Heart left ventricle (tissue), 16 donors: ENCODE measurements at regions of chr16 and their contacts with region 1.

Region 1: GRCh38 chr16:57300387-57301125 is 16.1 kb upstream of the PLLP start:
- DNase-seq: peak; percentile 98 to 99 (median 99)
- ATAC-seq: peak; percentile 94 to 96 (median 94)
- H3K4me3 ChIP-seq: peak overlapping the region in 11 of 12 donors; percentile 20 to 57 (median 52)
- H3K27ac ChIP-seq: peak overlapping the region; percentile 66 to 94 (median 89)
- H3K4me1 ChIP-seq: peaks cover 0 to 41% (median 29%) of the 10 kb centered on the region in 12 donors
- H3K27me3 ChIP-seq: no peaks in the 10 kb centered on the region
- CTCF ChIP-seq: peak; percentile 89 to 99 (median 96)
- POLR2A ChIP-seq: peak in 1 of 2 donors; percentile 68

Region 2: DNA sequence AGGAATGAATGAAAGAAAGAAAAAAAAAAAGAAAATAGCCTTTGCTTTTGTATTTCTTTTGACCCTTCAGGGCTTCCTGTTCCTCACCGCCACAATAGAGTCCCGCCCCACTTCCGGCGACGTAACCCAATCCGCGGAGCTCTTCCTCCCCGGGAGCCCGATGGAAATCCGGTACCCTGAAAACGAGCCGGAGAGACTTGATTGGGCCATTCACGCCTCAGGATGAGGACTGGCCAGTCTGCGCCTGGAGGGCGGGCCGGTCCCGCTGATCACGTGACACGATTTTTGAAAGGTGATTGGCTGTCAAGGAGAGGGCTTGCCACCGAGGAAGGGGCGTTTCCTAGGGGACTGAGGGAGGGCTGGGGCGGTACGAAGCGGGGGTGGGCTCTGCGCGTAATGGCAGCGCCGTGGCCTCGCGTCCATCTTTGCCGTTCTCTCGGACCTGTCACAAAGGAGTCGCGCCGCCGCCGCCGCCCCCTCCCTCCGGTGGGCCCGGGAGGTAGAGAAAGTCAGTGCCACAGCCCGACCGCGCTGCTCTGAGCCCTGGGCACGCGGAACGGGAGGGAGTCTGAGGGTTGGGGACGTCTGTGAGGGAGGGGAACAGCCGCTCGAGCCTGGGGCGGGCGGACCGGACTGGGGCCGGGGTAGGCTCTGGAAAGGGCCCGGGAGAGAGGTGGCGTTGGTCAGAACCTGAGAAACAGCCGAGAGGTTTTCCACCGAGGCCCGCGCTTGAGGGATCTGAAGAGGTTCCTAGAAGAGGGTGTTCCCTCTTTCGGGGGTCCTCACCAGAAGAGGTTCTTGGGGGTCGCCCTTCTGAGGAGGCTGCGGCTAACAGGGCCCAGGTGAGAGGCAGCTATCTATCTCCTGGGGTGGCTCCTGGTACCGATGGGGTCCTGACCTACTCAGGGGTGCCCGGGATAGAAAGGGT is 114.3 kb before region 1 on chr16 and contains the starts of genes PSME3IP1 and RSPRY1:
- intact Hi-C with region 1: loop called in 1 of 10 experiments (anchors 5 kb)
- DNase-seq: peak; percentile 97 to 99 (median 99)
- ATAC-seq: peak; percentile 97 to 99 (median 98)
- H3K4me3 ChIP-seq: peak within 1 kb of the TSS; percentile 80 to 99 (median 93)
- H3K27ac ChIP-seq: peak within 1 kb of the TSS; percentile 78 to 97 (median 94)
- H3K4me1 ChIP-seq: peaks cover 9 to 50% (median 27%) of the 10 kb centered on the region in 12 donors
- H3K27me3 ChIP-seq: no peaks in the 10 kb centered on the region
- CTCF ChIP-seq: no peak
- POLR2A ChIP-seq: peak in 1 of 2 donors; percentile 71
- total RNA-seq, gene PSME3IP1: 48.8 to 71.9 (median 65.8) TPM
- total RNA-seq, gene RSPRY1: 13.4 to 22.9 (median 17.1) TPM

Region 3: DNA sequence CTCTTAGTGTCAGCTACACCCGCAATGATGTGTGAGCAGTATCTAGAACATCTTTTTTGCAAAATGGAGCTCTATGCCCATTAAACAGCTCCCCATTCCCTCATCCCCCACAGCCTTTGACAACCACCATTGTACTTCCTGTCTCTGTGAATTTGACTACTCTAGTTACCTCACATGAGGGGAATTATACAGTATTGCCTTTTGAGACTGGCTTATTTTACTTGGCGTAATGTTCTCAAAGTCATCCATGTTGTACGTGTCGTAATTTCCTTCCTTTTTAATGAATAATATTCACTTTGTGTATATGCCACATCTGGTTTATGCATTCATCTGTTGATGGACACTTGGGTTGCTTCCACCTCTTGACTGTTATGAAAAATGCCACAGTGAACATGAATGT is 34.8 kb after region 1 on chr16:
- intact Hi-C with region 1: loop called in 1 of 10 experiments (anchors 1 kb)
- DNase-seq: no peak
- ATAC-seq: peak in 2 of 4 donors; percentile 53 to 92
- H3K4me3 ChIP-seq: no peak overlapping the region
- H3K27ac ChIP-seq: peak overlapping the region in 6 of 12 donors; percentile 11 to 66 (median 40)
- H3K4me1 ChIP-seq: peaks cover 0 to 17% (median 0%) of the 10 kb centered on the region in 12 donors
- H3K27me3 ChIP-seq: no peaks in the 10 kb centered on the region
- CTCF ChIP-seq: no peak
- POLR2A ChIP-seq: no peak

Region 4: GRCh38 chr16:57349212-57350031 is 48.9 kb after region 1 on chr16:
- intact Hi-C with region 1: no loop called
- DNase-seq: no peak
- ATAC-seq: peak in 1 of 4 donors; percentile 32
- H3K4me3 ChIP-seq: no peak overlapping the region
- H3K27ac ChIP-seq: no peak overlapping the region
- H3K4me1 ChIP-seq: peaks cover 0 to 13% (median 0%) of the 10 kb centered on the region in 12 donors
- H3K27me3 ChIP-seq: peaks cover 0 to 5% (median 0%) of the 10 kb centered on the region in 9 donors
- CTCF ChIP-seq: no peak
- POLR2A ChIP-seq: no peak

Region 5: DNA sequence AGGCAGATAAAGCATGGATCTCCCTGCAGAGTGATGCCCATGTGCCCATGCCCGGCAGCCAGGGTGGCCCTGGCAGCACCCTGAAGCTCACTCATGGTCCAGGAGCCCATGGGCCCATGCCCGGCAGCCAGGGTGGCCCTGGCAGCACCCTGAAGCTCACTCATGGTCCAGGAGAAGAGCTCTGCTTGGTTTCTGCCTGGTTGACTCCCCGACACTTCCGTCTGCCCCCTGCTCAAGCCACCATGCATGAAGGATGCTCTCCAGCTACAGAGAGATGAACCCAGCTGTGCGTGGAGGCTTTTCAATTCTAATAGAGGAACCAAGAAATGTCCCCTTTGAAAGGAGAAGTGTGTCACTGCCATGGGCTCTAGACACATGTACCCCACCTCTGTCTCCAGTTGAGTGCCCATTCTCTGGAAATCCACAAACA is 112.8 kb after region 1 on chr16:
- intact Hi-C with region 1: loop called in 9 of 10 experiments (anchors 1 to 2 kb)
- DNase-seq: no peak
- ATAC-seq: no peak
- H3K4me3 ChIP-seq: no peak overlapping the region
- H3K27ac ChIP-seq: no peak overlapping the region
- H3K4me1 ChIP-seq: peaks cover 3 to 43% (median 29%) of the 10 kb centered on the region in 12 donors
- H3K27me3 ChIP-seq: no peaks in the 10 kb centered on the region
- CTCF ChIP-seq: no peak
- POLR2A ChIP-seq: no peak

Region 6: GRCh38 chr16:57519796-57520360 is 219.3 kb after region 1 on chr16:
- intact Hi-C with region 1: loop called in 9 of 10 experiments (anchors 1 to 5 kb)
- DNase-seq: peak; percentile 70 to 91 (median 80)
- ATAC-seq: peak; percentile 56 to 88 (median 81)
- H3K4me3 ChIP-seq: no peak overlapping the region
- H3K27ac ChIP-seq: no peak overlapping the region
- H3K4me1 ChIP-seq: peaks cover 0 to 12% (median 3%) of the 10 kb centered on the region in 12 donors
- H3K27me3 ChIP-seq: peaks cover 0 to 6% (median 0%) of the 10 kb centered on the region in 9 donors
- CTCF ChIP-seq: peak; percentile 89 to 99 (median 97)
- POLR2A ChIP-seq: no peak